Mammary epithelial cell (primary cell): ENCODE measurements at regions of chr9 and their contacts with region 1.

Region 1: GRCh38 chr9:96854073-96854876 is at the start of gene ZNF782:
- DNase-seq: peak; percentile 92
- H3K4me3 ChIP-seq: peak within 1 kb of the TSS; percentile 80 to 92 (median 90)
- H3K27ac ChIP-seq: peak within 1 kb of the TSS; percentile 41
- H3K4me1 ChIP-seq: peaks cover 31% of the 10 kb centered on the region
- H3K27me3 ChIP-seq: no peaks in the 10 kb centered on the region
- CTCF ChIP-seq: no peak
- total RNA-seq, gene ZNF782: 3.7 to 5.5 TPM

Region 2: DNA sequence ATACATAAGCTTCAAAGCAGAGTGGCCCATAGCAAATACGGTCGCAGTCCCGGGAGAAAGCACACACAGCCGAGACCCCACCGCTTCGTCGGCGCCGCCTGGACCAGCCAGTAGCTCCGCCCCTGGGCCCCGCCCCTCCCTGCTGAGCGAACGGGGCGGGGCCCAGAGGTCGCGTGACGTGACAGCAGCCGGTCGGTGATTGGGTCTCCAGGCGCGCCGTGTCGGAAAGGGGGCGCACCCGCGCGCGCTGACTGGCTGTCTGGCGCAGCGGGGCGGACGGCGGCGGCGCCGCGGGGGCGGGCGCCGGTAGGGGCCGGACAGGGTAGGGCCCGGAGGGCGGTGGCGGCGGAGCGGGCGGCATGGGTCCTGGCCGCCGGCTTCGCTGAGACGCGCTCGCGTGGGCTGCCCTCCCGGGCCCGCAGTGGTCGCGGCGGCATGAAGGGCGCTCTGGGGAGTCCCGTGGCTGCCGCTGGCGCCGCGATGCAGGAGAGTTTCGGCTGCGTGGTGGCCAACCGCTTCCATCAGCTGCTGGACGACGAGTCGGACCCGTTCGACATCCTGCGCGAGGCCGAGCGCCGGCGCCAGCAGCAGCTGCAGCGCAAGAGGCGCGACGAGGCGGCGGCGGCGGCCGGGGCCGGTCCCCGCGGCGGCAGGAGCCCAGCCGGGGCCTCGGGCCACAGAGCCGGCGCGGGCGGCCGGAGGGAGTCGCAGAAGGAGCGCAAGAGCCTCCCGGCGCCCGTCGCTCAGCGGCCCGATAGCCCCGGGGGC is 404.2 kb before region 1 on chr9 and contains the start of gene HABP4:
- CTCF ChIA-PET with region 1: no interaction called
- dilution Hi-C with region 1: no loop called
- in situ Hi-C with region 1: no loop called
- intact Hi-C with region 1: loop called (anchors 10 kb)
- DNase-seq: peak; percentile 91
- H3K4me3 ChIP-seq: peak within 1 kb of the TSS; percentile 68 to 91 (median 90)
- H3K27ac ChIP-seq: peak within 1 kb of the TSS; percentile 56
- H3K4me1 ChIP-seq: peaks cover 8% of the 10 kb centered on the region
- H3K27me3 ChIP-seq: no peaks in the 10 kb centered on the region
- CTCF ChIP-seq: no peak
- total RNA-seq, gene HABP4: 7.7 to 9.6 TPM

Region 3: DNA sequence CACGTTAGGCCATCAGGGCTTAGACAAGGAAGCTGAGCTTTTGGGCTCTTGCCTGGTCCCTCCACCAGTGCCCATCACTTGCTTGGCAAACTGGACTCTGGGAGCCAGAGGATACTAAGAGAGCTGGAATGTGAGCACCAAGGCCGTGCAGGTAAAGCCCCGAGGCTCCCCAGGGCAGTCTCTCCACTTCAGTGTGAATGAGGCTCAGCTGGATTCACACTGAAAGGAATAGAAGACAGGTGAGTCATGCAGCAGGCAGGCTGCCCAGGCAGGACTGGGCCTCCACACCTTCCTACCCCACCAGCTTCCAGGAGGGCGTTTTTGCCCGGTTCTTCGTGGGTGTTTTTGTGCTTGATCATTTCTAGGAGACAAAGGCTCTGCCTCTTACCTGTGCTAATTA is 191.9 kb after region 1 on chr9:
- CTCF ChIA-PET with region 1: no interaction called
- dilution Hi-C with region 1: no loop called
- in situ Hi-C with region 1: no loop called
- intact Hi-C with region 1: loop called (anchors 1 kb)
- DNase-seq: peak; percentile 99
- H3K4me3 ChIP-seq: no peak overlapping the region
- H3K27ac ChIP-seq: peak overlapping the region; percentile 93
- H3K4me1 ChIP-seq: peaks cover 21% of the 10 kb centered on the region
- H3K27me3 ChIP-seq: no peaks in the 10 kb centered on the region
- CTCF ChIP-seq: no peak

Region 4: GRCh38 chr9:97160255-97160654 is 306.0 kb after region 1 on chr9:
- CTCF ChIA-PET with region 1: no interaction called
- dilution Hi-C with region 1: no loop called
- in situ Hi-C with region 1: no loop called
- intact Hi-C with region 1: loop called (anchors 5 kb)
- DNase-seq: no peak
- H3K4me3 ChIP-seq: no peak overlapping the region
- H3K27ac ChIP-seq: no peak overlapping the region
- H3K4me1 ChIP-seq: no peaks in the 10 kb centered on the region
- H3K27me3 ChIP-seq: no peaks in the 10 kb centered on the region
- CTCF ChIP-seq: no peak

Region 5: GRCh38 chr9:97386733-97387503 is 532.6 kb after region 1 on chr9:
- CTCF ChIA-PET with region 1: no interaction called
- dilution Hi-C with region 1: no loop called
- in situ Hi-C with region 1: loop called (anchors 25 kb)
- intact Hi-C with region 1: no loop called
- DNase-seq: peak; percentile 66
- H3K4me3 ChIP-seq: no peak overlapping the region
- H3K27ac ChIP-seq: no peak overlapping the region
- H3K4me1 ChIP-seq: no peaks in the 10 kb centered on the region
- H3K27me3 ChIP-seq: peaks cover 3% of the 10 kb centered on the region
- CTCF ChIP-seq: peak; percentile 99

Region 6: DNA sequence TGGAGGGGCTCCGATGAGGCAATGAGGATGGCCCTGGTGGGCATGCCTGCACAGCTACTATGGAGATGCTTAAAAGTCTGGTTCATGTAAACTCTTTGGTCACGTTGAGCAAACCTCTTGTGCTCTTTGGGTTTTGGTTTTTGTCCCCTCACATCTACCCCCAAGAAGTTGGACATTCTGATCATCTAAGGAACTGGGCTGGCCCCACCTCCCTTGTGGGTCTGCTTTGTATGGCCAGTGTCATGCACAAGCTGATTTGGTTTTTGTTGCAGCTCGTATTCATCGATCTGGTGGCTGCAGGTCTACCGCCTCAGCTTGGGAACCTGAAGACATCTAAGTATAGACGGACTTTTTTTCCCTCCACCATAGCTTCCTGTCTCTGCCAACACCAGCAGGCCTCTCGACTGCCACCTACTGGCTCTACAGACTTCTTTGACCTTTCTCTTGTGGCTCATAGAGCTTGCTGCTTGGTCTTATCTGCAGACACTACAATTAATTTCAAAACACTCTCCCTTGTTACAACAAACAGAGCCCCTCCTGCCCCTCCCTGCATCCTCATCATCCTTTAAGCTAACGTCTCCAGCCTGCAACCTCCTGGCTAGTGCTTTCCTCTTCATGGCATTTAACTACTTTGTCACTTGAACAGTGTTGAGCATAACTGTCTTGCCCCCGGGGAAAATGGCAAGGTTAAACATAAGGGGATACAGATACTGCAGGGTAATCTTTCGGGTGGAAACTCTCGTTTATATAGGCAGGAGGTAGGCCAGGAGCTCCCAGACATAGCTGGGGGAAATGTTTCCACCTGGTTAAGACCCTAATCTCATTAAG is 744.4 kb after region 1 on chr9:
- CTCF ChIA-PET with region 1: no interaction called
- dilution Hi-C with region 1: no loop called
- in situ Hi-C with region 1: loop called in 1 of 2 experiments (anchors 25 kb)
- intact Hi-C with region 1: loop called (anchors 5 kb)
- DNase-seq: peak; percentile 56
- H3K4me3 ChIP-seq: no peak overlapping the region
- H3K27ac ChIP-seq: no peak overlapping the region
- H3K4me1 ChIP-seq: no peaks in the 10 kb centered on the region
- H3K27me3 ChIP-seq: no peaks in the 10 kb centered on the region
- CTCF ChIP-seq: peak; percentile 90 to 92